ENCODE measurements at regions of chr4 and their contacts with region 1.

Region 1: DNA sequence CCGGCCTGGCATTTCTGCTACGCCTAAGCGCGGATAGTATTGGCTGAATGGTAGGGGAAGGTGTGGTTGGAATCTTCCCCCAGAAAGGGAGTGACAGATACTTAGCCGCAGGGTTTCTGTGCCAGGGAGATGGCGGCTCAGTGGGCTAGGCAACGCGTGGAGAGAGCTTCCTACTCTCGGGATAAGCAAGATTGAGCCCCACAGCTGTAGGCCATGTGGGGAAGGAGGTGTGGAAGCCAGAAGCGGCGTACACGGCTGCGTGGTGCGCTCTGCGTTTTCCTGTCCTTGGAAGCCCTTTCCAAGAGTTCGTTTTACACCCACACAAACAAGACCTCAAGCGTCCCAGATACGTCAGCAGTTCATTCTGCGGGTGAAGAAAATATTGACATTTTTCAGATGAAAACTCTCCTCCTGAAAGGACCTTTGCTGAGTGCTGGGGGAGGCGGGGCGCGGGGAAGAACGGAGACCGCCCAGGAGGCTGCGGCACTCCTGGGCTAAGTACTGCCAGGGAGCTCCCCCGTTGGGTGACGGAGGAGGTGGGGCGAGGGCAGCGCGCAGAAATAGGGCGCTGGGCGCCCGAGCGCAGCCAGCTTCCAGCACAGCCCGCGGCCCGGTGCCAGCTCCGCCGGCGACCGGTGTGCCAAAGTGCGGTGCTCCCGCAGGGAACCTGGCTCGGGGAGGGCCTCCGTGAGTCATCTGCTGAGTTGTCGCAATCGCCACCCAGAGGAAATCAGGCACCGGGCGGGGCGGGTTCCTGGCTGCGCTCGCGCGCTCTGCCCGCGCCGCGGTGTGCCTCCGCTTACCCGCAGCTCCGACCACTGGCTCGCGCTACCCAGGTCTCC is at the start of gene GPAT3:
- DNase-seq: peak; percentile 92
- H3K4me3 ChIP-seq: peak within 1 kb of the TSS; percentile 72
- H3K27ac ChIP-seq: peak within 1 kb of the TSS; percentile 82
- H3K4me1 ChIP-seq: no peaks in the 10 kb centered on the region
- H3K27me3 ChIP-seq: no peaks in the 10 kb centered on the region
- CTCF ChIP-seq: no peak
- total RNA-seq, gene GPAT3: 23.5 to 24.3 TPM

Region 2: GRCh38 chr4:83276299-83277040 is 259.3 kb before region 1 on chr4:
- intact Hi-C with region 1: no loop called
- DNase-seq: no peak
- H3K4me3 ChIP-seq: no peak overlapping the region
- H3K27ac ChIP-seq: no peak overlapping the region
- H3K4me1 ChIP-seq: no peaks in the 10 kb centered on the region
- H3K27me3 ChIP-seq: no peaks in the 10 kb centered on the region
- CTCF ChIP-seq: no peak

Region 3: DNA sequence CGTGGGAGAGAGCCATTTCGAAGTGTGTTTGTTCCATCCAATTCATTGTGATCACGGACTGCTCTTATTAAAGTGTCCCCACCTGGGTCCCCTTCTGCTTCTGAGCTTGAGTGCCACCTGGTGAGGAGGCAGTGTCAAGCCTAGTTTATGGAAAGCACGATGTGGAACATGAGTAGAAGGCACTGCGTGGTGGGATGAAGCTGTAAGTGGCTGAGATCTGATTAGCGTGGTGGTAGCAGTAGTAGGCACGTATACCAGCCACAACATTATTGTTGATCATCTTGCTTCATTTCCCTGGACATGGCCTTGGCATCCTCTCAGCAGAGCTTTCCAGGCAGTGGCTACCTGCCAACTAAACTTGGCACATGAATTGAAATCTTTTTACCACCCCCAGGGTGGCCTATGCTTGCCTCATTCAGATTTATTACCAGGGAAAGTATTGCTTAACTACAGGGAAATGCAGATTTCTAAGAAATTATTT is 46.6 kb after region 1 on chr4:
- intact Hi-C with region 1: loop called (anchors 5 kb)
- DNase-seq: peak; percentile 81
- H3K4me3 ChIP-seq: no peak overlapping the region
- H3K27ac ChIP-seq: peak overlapping the region; percentile 24
- H3K4me1 ChIP-seq: peaks cover 6% of the 10 kb centered on the region
- H3K27me3 ChIP-seq: no peaks in the 10 kb centered on the region
- CTCF ChIP-seq: no peak

Region 4: DNA sequence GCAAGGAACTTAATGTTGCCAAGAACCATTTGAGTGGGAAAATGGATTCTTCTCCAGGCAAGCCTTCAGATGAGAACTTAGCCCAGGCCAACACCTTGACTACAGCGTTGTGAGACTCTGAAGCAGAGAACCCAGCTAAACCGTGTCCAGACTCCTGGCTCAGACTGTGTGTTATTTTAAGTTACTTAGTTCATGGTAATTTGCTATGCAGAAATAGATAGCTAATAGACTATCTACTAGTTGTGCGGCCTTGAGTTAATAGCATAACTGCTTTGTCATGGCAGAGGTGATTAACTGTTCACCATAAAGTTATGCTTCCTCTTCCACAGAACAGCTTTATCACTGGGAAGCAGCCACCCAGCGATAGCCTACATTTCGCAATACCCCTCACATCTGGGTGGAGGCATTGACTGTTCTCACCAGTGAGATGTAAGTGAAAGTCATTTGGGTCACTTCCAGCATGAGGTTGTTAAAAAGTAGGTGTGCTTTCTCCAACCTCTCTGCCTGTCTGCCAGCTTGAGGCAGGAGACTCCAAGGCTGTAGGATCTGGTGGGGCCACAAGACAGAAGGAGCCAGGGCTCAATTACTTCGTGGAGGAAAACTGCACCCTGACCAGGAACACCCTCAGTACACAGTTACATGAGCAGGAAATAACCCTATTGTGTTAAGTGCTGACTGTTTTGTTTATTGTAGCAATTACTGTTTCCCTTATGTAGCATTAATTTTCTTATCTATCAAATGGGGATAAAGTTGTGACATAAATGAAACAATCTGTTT is 94.4 kb after region 1 on chr4:
- intact Hi-C with region 1: loop called (anchors 10 kb)
- DNase-seq: peak; percentile 88
- H3K4me3 ChIP-seq: no peak overlapping the region
- H3K27ac ChIP-seq: peak overlapping the region; percentile 68
- H3K4me1 ChIP-seq: peaks cover 4% of the 10 kb centered on the region
- H3K27me3 ChIP-seq: no peaks in the 10 kb centered on the region
- CTCF ChIP-seq: no peak